Astrocyte of the cerebellum (primary cell): ENCODE measurements at regions of chr15 and their contacts with region 1.

Region 1: DNA sequence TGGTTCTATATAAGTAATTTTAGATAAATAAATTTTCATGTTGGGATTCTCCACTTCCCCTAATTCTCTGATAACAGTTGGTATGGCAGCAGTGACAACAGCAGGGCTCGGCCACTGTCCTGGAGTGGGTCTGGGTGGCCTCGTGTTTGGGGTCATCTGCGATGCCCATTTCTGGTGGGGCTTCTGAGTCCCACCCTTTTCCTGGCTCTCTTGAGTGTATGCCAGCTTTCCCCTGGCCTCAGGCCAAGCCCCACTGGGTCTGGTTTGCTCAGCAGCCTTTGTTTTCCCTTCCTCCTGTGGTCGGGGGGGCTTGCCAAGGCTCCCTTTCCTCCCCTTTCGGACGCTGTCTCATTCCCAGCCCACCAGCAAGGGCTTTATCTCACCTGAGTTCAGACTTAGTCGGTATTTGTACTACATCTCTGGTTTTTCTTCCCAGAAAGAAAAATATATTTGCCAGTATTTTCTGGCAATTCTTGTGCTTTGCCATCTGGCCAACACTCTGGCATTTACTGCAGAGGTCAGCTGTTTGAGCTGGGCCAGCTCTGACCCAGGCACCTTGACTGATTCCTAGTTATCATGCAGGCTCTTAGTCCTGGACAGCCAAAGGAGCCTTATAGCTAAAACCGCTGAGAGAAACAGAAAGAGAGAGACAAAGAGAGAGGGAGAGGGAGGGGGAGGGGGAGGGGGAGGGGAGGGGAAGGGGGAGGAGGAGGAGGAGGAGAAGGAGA is 35.2 kb downstream of the MYZAP start:
- DNase-seq: no peak
- H3K4me3 ChIP-seq: no peak overlapping the region
- CTCF ChIP-seq: no peak

Region 2: GRCh38 chr15:57554063-57554811 is 72.6 kb before region 1 on chr15:
- in situ Hi-C with region 1: no loop called
- DNase-seq: no peak
- H3K4me3 ChIP-seq: no peak overlapping the region
- CTCF ChIP-seq: no peak

Region 3: DNA sequence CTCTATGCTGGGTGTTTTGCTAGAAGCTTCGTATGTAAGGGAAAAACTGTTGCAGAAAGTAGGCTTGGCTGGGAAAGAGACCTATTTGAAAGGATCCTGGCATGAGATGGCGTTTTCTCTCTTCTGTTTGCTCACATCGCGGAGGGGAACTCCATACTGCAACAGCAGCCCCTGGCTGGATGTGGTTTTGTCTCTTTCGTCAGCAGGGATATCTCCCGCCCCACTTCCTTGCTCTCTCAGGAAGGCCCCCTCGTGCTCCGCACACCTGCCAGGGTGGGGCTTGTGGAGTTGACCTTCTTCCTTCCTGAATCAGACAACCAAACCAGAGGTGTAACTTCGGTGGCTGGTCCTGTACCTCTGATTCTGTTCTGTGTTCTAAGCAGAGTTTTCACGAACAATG is 61.6 kb before region 1 on chr15:
- in situ Hi-C with region 1: loop called (anchors 5 kb)
- DNase-seq: no peak
- H3K4me3 ChIP-seq: no peak overlapping the region
- CTCF ChIP-seq: no peak